ENCODE measurements at regions of chr6 and their contacts with region 1.

Region 1: DNA sequence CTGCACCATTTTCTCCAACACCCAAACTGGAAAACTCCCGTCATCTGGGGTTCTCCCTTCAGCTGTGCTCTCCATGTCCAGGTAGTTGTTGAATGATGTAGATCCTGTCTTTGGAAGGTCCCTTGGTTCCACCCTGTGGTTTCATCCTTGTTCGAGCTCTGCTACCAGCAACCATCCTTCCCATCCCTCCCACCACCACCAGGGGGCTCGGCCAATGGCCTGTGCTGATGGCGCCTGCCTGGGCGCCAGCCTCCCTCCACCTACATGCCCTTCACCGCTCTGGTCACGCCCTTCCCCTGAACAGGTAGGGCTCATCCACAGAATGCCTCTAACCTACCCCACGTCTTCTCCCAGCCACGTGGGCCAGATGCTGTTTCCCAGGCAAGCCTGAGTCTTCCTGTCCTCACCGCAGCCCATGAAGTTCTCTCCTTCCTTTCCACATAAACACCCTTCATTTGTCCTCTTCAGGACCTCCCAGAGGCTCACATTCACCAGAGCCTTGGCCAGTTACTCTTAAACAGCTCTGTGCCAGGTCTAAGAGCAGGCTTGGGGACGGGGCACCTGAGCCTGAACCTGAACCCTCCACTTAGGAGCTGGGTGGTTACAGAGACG is 75.1 kb upstream of the DUSP22 start:
- DNase-seq: peak; percentile 54
- H3K4me3 Mint-ChIP-seq: no peak overlapping the region
- H3K27ac Mint-ChIP-seq: no peak overlapping the region
- H3K4me1 Mint-ChIP-seq: peaks cover 53% of the 10 kb centered on the region
- H3K27me3 Mint-ChIP-seq: peaks cover 4% of the 10 kb centered on the region

Region 2: DNA sequence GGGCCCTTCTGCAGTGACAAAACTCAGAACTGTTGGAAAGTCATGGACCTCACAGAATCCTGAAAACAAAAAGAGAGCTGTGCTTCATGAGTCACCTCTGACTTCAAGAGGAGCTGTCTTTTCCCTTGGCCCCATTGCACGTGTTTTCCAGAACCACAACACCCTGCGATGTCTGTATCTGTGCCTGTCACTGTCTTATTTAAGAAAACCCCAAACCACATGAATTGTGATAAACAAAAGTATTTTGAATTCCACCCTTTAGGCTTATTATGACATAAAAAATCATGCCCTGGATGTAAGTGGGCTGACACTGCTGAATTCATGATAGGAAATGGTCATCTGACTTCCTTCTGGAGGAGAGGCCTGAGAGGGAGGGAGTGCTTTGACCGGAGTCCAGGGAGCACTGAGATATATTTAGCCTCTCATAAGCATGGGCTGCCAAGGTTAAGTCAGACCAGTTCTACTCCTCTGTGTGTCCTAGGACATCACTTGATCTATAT is 21.2 kb before region 1 on chr6:
- CTCF ChIA-PET with region 1: interaction called, 72 read pairs
- intact Hi-C with region 1: loop called (anchors 1 kb)
- DNase-seq: peak; percentile 89
- H3K4me3 Mint-ChIP-seq: no peak overlapping the region
- H3K27ac Mint-ChIP-seq: peak overlapping the region; percentile 64
- H3K4me1 Mint-ChIP-seq: peaks cover 50% of the 10 kb centered on the region
- H3K27me3 Mint-ChIP-seq: no peaks in the 10 kb centered on the region

Region 3: DNA sequence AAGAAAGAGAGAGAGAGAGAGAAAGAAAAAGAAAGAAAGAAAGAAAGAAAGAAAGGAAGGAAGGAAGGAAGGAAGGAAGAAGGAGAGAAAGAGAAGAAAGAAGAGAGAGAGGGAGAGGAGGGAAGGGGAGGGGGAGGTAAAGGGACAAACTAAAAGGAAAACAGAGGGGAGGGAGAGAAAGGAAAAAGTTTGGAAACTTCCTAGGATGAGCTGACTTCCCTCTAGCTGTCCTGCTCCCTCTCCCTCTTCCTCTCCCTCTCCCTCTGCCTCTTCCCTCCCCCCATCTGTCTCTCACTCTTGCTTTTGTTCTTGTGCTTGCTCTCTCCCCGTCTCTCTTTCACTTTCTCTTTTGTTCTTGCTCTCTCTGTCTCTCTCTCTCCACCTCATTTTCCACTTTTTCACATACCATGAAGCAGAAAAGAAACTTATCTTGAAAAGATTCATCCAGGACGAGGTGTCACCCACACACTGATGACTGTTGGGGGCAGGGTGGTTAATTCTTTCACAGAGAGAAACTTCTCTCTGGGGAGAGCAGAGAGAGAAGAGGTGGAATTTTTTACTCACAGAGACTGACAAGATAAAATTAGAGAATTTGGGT is 18.7 kb after region 1 on chr6:
- CTCF ChIA-PET with region 1: interaction called, 6 read pairs
- intact Hi-C with region 1: loop called (anchors 1 kb)
- DNase-seq: peak; percentile 88
- H3K4me3 Mint-ChIP-seq: peak overlapping the region; percentile 52
- H3K27ac Mint-ChIP-seq: peak overlapping the region; percentile 86
- H3K4me1 Mint-ChIP-seq: peaks cover 41% of the 10 kb centered on the region
- H3K27me3 Mint-ChIP-seq: no peaks in the 10 kb centered on the region

Region 4: DNA sequence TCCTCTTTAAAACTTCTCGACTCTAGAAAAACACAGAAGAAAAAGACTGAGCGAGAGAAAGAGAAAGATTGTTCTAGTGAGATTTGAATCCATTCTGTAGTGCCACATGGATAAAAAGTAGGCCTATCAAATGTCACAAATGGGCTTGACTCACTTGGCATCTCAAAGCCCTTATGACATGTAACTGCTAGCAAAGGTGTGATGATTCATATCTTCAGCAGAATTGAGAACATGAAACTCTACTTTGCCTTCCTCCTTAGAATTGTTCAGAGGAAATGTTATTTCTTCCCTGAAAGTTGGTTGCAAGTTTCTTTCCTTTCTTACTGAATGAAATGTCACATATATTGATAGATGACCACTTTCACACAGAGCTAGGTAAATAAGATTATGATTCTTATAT is 34.8 kb after region 1 on chr6:
- CTCF ChIA-PET with region 1: no interaction called
- intact Hi-C with region 1: loop called (anchors 1 kb)
- DNase-seq: no peak
- H3K4me3 Mint-ChIP-seq: no peak overlapping the region
- H3K27ac Mint-ChIP-seq: peak overlapping the region; percentile 63
- H3K4me1 Mint-ChIP-seq: peaks cover 43% of the 10 kb centered on the region
- H3K27me3 Mint-ChIP-seq: no peaks in the 10 kb centered on the region

Region 5: GRCh38 chr6:379367-380181 is 162.4 kb after region 1 on chr6:
- CTCF ChIA-PET with region 1: no interaction called
- intact Hi-C with region 1: no loop called
- DNase-seq: no peak
- H3K4me3 Mint-ChIP-seq: no peak overlapping the region
- H3K27ac Mint-ChIP-seq: no peak overlapping the region
- H3K4me1 Mint-ChIP-seq: peaks cover 13% of the 10 kb centered on the region
- H3K27me3 Mint-ChIP-seq: peaks cover 34% of the 10 kb centered on the region

Region 6: DNA sequence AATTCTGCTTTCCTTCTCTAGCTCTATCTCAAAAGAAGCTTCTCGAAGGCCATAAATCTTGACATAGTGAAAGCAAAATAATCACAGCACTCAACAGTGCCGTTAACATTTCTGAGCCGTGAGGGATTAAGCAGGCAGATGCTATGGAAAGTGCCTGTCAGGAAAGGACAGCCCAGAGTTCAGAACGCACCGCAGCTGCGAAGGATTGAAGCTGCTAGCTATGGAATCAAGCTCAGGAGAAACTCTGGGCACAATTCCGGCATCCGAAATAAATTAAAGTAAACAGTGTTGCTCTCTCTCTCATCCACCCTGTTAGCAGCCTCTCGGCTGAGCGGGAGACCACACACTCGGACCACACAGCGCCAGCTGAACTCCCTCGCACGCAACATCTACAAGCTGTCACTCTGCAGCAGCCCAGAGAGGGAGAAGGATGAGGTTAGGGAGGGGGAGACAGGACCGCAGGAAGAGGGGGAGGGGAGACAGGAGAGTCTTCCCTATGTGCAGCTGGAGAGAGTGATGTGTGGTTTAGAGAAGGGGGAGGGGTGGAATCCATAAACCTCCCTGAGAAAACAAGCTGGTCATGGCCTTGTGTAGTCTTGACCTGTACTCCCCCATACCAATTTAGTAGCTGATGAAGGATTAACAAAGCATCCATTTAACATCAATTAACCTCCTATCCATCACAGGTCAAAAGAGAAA is 466.7 kb after region 1 on chr6:
- CTCF ChIA-PET with region 1: no interaction called
- intact Hi-C with region 1: loop called (anchors 10 kb)
- DNase-seq: no peak
- H3K4me3 Mint-ChIP-seq: peak overlapping the region; percentile 10
- H3K27ac Mint-ChIP-seq: no peak overlapping the region
- H3K4me1 Mint-ChIP-seq: peaks cover 52% of the 10 kb centered on the region
- H3K27me3 Mint-ChIP-seq: no peaks in the 10 kb centered on the region